PC-9 (cell line): ENCODE measurements at regions of chr5 and their contacts with region 1.

Region 1: GRCh38 chr5:88756953-88757352 is 126.0 kb downstream of the MEF2C start:
- DNase-seq: no peak
- H3K4me3 ChIP-seq: no peak overlapping the region
- H3K27ac ChIP-seq: no peak overlapping the region
- H3K4me1 ChIP-seq: 0 out of 2 replicates have a peak, but pooled peaks cover 6% of the 10 kb centered on the region
- H3K27me3 ChIP-seq: no peaks in the 10 kb centered on the region
- CTCF ChIP-seq: no peak

Region 2: DNA sequence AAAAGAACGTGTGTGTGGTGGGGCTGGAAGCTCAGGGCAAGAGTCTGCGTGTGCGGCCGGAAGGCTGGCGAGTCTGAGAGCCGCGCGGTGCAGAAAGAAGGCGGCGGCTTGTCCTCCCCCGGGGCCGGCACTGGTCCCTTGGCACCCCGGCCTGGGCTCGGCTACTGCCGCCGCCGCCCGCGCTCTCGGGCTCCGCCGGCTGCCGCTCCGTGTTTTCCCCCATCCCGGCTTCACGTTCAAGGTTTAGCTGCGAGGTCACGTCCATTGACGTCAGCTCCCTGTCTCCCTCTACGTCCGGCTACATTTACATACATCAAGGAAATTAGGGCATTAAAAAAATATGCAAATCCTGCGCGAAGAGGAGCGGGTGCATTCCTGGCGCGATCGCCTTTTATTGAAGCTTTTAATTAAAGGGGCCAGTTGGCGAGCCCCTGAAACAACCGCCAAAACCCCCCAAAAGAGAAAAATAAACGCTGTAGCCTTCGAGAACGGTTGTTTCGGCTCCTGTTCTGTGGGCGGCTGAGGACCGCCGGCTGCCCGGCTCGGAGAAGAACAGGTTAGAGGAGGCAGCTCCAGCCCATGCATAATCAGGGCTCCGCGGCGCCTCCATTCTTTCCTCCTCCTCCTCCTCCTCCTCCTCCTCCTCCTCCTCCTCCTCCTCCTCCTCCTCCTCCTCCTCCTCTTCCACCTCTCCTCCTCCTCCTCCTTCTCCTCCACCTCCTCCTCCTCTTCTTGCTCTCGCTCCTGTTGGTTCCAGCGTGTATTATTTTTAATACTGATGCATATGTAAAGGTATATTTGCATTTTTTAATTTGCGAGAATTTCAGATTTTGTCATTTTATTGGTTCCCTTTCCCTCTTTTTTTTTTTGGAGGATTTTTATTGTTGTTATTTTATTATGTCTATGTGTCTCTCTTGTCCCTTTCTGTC is 81.0 kb before region 1 on chr5:
- CTCF ChIA-PET with region 1: no interaction called
- POLR2A ChIA-PET with region 1: no interaction called
- intact Hi-C with region 1: no loop called
- DNase-seq: peak; percentile 77 to 80
- H3K4me3 ChIP-seq: peak overlapping the region; percentile 77
- H3K27ac ChIP-seq: peak overlapping the region; percentile 79
- H3K4me1 ChIP-seq: peaks cover 10% of the 10 kb centered on the region
- H3K27me3 ChIP-seq: no peaks in the 10 kb centered on the region
- CTCF ChIP-seq: no peak

Region 3: DNA sequence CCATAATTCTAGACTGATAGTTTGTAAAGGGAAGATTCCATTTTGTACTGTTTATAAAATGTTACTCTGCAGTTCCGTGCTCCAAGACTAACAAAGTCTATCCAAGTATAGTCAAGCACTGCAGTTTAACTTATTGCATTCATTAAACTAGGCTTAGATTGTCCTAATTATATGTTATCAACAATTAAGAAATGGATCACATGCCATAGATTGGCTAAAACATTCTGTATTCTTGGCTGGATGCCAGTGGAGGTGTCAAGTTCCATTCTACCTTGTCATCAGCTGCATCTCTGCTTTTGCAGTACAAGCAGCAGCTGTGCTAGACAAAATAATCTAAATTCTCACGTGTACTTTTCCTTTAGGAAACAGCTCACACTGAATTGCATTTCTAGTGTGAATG is 195.4 kb after region 1 on chr5:
- CTCF ChIA-PET with region 1: no interaction called
- POLR2A ChIA-PET with region 1: no interaction called
- intact Hi-C with region 1: loop called (anchors 10 kb)
- DNase-seq: no peak
- H3K4me3 ChIP-seq: no peak overlapping the region
- H3K27ac ChIP-seq: no peak overlapping the region
- H3K4me1 ChIP-seq: no peaks in the 10 kb centered on the region
- H3K27me3 ChIP-seq: no peaks in the 10 kb centered on the region
- CTCF ChIP-seq: no peak

Region 4: DNA sequence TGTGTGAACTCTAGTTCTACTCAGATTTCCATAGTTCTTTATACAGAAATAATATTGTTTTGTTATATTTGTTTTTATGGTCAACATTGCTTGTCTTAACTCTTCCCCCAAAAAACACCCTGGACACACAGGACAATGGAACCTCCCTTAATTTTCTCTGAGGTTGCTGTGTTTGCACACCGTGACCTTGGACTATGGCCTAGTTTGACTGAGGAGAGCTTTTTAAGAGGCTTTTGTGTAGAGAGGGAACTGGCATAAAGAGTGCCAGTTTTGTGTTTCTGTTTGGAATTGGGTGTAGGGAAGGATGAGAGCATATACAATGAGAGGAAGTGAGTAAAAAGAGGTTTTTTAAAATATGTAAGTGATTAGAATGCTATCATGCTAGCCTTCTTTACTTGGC is 227.1 kb after region 1 on chr5:
- CTCF ChIA-PET with region 1: no interaction called
- POLR2A ChIA-PET with region 1: no interaction called
- intact Hi-C with region 1: no loop called
- DNase-seq: no peak
- H3K4me3 ChIP-seq: no peak overlapping the region
- H3K27ac ChIP-seq: no peak overlapping the region
- H3K4me1 ChIP-seq: no peaks in the 10 kb centered on the region
- H3K27me3 ChIP-seq: no peaks in the 10 kb centered on the region
- CTCF ChIP-seq: no peak